HEK293 (cell line): ENCODE measurements at regions of chr1 and their contacts with region 1.

Region 1: GRCh38 chr1:161045750-161046571 is at the start of gene USF1:
- H3K4me3 ChIP-seq: peak within 1 kb of the TSS; percentile 64
- H3K27ac ChIP-seq: peak within 1 kb of the TSS; percentile 65
- H3K4me1 ChIP-seq: 0 out of 2 replicates have a peak, but pooled peaks cover 4% of the 10 kb centered on the region
- CTCF ChIP-seq: no peak

Region 2: DNA sequence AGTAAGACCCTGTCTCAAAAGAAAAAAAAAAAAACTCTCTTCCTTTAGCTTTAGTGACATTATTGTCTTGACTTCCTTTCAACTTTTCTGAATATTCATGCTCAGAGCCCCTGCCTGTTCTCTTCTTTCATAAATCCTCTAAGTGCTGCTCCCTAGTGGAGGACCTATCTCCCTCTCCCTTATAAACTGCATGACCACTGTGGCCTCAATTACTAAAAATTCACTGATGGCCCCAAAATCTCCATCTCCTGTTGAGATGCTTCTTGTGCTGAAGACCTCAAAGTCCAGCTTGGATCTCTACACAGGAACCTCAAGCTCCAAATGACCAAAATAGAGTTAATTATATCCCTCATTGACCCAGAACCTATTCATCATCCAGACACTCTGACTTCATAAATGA is 168.7 kb before region 1 on chr1:
- CTCF ChIA-PET with region 1: no interaction called
- POLR2A ChIA-PET with region 1: no interaction called
- H3K4me3 ChIP-seq: no peak overlapping the region
- H3K27ac ChIP-seq: no peak overlapping the region
- H3K4me1 ChIP-seq: no peaks in the 10 kb centered on the region
- CTCF ChIP-seq: no peak

Region 3: DNA sequence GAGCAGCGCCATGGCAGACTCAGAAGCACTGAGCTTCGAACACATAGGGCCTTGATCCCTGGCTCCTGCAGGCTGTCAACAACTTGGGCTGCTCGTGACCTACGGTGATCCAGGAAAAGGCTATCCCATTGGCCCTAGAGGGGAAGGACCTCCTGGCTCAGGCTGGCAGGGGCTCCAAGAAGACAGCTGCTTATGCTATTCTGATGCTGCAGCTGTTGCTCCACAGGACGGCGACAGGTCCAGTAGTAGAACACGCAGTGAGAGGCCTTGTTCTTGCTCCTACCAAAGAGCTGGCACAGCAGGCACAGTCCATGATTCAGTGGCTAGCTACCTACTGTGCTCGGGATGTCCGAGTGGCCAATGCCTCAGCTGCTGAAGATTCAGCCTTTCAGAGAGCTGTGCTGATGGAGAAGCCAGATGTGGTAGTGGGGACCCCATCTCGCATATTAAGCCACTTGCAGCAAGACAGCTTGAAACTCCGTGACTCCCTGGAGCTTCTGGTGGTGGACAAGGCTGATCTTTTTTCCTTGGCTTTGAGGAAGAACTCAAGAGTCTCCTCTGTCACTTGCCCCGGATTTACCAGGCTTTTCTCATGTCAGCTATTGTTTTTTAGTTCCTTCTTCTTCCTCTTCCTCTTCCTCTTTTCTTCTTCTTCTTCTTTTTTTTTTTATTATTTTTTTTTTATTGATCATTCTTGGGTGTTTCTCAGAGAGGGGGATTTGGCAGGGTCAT is 110.3 kb before region 1 on chr1:
- CTCF ChIA-PET with region 1: no interaction called
- POLR2A ChIA-PET with region 1: no interaction called
- H3K4me3 ChIP-seq: no peak overlapping the region
- H3K27ac ChIP-seq: no peak overlapping the region
- H3K4me1 ChIP-seq: no peaks in the 10 kb centered on the region
- CTCF ChIP-seq: no peak

Region 4: GRCh38 chr1:160997323-160998038 is 48.5 kb before region 1 on chr1:
- CTCF ChIA-PET with region 1: interaction called, 6 read pairs
- POLR2A ChIA-PET with region 1: interaction called, 14 read pairs
- H3K4me3 ChIP-seq: no peak overlapping the region
- H3K27ac ChIP-seq: no peak overlapping the region
- H3K4me1 ChIP-seq: peaks cover 5% of the 10 kb centered on the region
- CTCF ChIP-seq: peak; percentile 54; the same call in 1 of the 2 replicates

Region 5: DNA sequence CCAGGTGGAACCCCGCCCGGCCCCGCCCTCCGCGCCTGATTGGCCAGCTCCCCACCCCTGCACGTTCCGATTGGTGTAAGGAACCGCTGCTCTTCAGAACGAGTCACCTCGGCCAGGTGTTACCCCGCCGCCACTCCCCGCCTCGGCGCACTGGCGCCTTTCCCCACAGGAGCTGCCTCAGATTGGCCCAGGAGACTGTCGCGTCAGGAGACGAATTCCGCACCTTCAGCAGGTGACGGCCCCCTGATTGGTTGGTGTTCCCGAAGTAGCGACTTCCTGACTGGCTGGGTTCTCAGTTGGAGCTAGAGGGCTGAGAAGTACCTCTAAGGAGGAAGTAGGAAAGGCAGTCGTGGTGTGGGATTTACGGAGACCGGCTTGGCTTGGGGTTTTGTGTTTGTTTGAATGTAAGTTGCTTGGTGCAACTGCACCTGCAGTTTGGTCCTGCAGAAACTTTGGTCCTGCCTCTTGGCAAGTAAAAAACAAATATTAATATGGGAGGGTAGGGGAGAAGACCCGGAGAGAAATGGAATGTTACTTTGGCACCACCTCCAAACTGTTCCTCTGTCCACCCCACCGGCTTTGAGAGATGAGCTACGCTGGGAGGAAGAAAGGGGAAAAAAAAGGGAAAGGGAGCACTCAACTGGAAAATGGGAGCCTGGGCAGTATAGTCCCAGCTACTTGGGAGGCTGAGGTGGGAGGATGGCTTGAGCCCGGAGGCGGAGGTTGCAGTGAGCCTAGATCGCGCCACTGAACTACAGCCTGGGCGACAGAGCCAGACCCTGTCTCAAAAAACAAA is 24.6 kb before region 1 on chr1:
- CTCF ChIA-PET with region 1: interaction called, 8 read pairs
- POLR2A ChIA-PET with region 1: interaction called, 50 read pairs
- H3K4me3 ChIP-seq: peak overlapping the region; percentile 59
- H3K27ac ChIP-seq: 0 out of 2 replicates have a peak overlapping the region, but pooled peaks have one; percentile 18
- H3K4me1 ChIP-seq: 0 out of 2 replicates have a peak, but pooled peaks cover 2% of the 10 kb centered on the region
- CTCF ChIP-seq: no peak

Region 6: DNA sequence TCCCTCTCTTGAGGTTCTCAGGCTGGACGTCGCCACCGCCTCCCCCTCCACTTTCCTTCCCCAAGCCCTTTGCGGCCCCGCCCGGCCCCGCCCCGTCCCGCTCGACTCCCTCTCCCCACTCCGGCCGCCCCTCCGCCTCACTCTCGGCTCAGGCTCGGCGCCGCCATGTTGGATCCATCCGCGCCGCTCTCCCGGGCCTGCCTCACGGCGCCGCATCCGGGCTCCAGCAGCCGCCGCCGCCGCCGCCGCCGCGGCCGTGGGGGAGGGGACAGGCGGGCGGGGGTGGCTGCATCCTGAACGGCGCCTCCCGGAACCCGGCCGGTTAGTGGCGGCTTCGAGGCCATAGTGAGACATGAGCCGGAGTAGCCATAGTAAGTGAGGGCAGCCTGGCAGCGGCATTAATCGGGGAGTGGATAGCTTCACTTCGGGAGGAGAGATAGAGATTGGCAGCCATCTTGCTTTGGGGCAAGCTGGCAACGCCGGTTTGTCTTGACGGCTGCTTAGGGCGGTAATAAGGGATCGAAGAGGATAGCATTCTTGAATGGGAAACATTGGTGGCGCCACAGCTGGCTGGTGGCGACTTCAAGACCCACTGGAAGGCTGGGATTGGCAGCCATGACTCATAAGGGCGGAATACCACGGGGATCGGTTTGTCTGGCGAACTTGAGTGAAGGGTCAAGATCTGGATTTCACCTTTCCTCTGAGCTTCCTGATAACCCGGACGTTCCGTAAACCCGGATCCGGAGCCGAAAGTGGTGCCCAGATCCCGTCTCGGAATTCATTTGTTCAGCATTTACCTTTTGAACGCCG is 86.7 kb after region 1 on chr1 and contains the start of gene DEDD:
- CTCF ChIA-PET with region 1: no interaction called
- POLR2A ChIA-PET with region 1: interaction called, 12 read pairs
- H3K4me3 ChIP-seq: peak within 1 kb of the TSS; percentile 84
- H3K27ac ChIP-seq: peak within 1 kb of the TSS; percentile 91
- H3K4me1 ChIP-seq: 0 out of 2 replicates have a peak, but pooled peaks cover 2% of the 10 kb centered on the region
- CTCF ChIP-seq: peak; percentile 71; the same call in 1 of the 2 replicates